ENCODE measurements at regions of chr13 and their contacts with region 1.

Region 1: DNA sequence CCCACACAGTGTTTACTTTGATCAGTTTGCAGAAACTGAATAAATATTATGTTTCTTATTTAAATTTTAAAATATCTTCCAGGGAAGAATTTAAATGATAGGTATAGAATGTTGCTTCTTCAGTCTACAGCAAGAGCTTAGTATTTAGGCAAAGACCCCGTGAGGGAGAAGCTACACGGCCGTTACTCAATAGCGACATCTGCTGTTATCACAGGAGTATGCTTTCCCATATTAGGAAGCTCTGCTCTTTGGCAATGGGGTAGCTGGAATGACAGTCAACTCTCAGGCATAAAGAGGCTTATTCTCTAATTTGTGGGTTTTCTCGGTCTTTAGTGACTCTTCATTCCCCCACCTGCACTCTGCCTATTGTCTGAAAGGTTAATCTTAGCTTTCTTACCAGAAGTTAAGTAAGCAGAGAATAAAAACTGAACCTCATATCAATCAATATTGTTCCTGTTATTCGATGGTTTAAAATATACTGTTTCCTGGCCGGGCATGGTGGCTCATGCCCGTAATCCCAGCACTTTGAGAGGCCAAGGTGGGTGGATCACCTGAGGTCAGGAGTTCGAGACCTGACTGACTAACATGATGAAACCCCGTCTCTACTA is 13.2 kb upstream of the LHFPL6 start:
- DNase-seq: peak in 7 of 9 donors; percentile 5 to 48 (median 41)
- ATAC-seq: peak; percentile 85
- H3K4me3 ChIP-seq: no peak overlapping the region
- H3K4me3 Mint-ChIP-seq: no peak overlapping the region
- H3K27ac ChIP-seq: no peak overlapping the region
- H3K27ac Mint-ChIP-seq: no peak overlapping the region
- H3K4me1 ChIP-seq: no peaks in the 10 kb centered on the region
- H3K4me1 Mint-ChIP-seq: no peaks in the 10 kb centered on the region
- H3K27me3 ChIP-seq: no peaks in the 10 kb centered on the region
- H3K27me3 Mint-ChIP-seq: peaks cover 3 to 17% (median 10%) of the 10 kb centered on the region in 5 donors

Region 2: DNA sequence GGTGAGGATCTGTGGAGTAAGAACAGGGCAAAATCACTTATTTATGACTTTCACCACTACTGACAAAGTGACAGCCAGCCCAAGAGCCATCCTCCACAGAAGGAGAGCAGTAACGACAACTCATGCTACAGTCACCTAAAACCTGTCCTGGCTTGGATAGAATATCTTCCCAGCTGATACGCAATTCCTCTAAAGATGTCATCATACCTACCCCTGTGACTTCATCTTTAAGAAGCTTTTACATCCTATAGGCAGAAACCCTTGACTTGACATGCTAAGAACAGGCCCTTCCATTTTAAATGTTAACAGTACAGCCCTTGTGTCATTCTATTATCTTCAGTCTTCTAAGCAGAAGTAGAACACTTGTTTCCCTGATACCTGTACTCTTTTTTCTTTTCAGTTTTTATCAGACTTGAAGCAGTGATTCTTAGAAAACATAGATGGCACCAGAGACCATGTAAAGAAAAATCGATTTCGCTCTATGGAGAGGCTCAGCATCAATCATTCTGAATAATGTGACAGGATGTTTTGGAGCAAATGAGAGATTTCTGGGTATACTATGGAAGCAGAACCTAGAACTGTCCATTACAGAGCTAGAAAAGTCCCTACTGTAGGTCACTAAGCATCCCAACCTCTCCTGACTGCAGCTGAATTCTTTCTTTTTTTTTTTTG is 645.7 kb before region 1 on chr13:
- CTCF ChIA-PET with region 1: no interaction called
- POLR2A ChIA-PET with region 1: no interaction called
- intact Hi-C with region 1: loop called in 1 of 2 experiments (anchors 1 kb)
- DNase-seq: peak in 2 of 9 donors; percentile 0 to 3
- ATAC-seq: no peak
- H3K4me3 ChIP-seq: no peak overlapping the region
- H3K4me3 Mint-ChIP-seq: no peak overlapping the region
- H3K27ac ChIP-seq: no peak overlapping the region
- H3K27ac Mint-ChIP-seq: no peak overlapping the region
- H3K4me1 ChIP-seq: no peaks in the 10 kb centered on the region
- H3K4me1 Mint-ChIP-seq: no peaks in the 10 kb centered on the region
- H3K27me3 ChIP-seq: no peaks in the 10 kb centered on the region
- H3K27me3 Mint-ChIP-seq: peaks cover 0 to 11% (median 7%) of the 10 kb centered on the region in 5 donors

Region 3: DNA sequence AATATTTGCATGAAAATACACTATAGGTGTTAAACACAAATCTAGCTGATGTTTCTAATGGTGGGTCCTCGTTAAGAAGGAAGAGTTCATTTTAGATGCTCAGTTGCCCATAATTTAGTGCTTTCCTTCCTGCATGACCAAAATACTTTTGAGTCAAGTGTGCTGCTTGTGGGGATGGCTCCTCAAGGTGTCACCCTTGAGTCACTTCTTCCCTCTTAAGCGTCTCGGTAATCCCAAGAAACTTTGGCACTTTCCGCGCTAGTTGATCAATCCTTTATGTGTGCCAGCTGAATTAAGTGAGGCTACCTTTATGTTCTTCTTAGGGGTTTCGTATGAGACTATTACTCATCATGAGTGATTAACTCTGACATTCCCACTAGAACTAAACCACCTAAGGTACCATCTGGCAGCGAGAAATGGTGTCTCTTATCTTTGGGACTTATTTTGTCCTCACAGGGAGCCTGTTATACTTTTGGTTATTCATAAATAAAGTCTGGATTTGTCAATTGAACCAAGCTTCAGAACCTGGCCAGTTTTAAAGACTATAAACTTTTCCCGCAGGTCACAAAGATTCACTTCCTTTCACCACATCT is 471.2 kb before region 1 on chr13:
- CTCF ChIA-PET with region 1: no interaction called
- POLR2A ChIA-PET with region 1: no interaction called
- intact Hi-C with region 1: loop called (anchors 1 kb)
- DNase-seq: peak in 1 of 9 donors; percentile 1
- ATAC-seq: no peak
- H3K4me3 ChIP-seq: no peak overlapping the region
- H3K4me3 Mint-ChIP-seq: no peak overlapping the region
- H3K27ac ChIP-seq: no peak overlapping the region
- H3K27ac Mint-ChIP-seq: no peak overlapping the region
- H3K4me1 ChIP-seq: no peaks in the 10 kb centered on the region
- H3K4me1 Mint-ChIP-seq: peaks cover 0 to 5% (median 0%) of the 10 kb centered on the region in 7 donors
- H3K27me3 ChIP-seq: no peaks in the 10 kb centered on the region
- H3K27me3 Mint-ChIP-seq: peaks cover 24 to 55% (median 39%) of the 10 kb centered on the region in 5 donors

Region 4: GRCh38 chr13:39273953-39274738 is 342.0 kb before region 1 on chr13:
- CTCF ChIA-PET with region 1: no interaction called
- POLR2A ChIA-PET with region 1: no interaction called
- intact Hi-C with region 1: loop called in 1 of 2 experiments (anchors 5 kb)
- DNase-seq: no peak
- ATAC-seq: no peak
- H3K4me3 ChIP-seq: no peak overlapping the region
- H3K4me3 Mint-ChIP-seq: no peak overlapping the region
- H3K27ac ChIP-seq: no peak overlapping the region
- H3K27ac Mint-ChIP-seq: no peak overlapping the region
- H3K4me1 ChIP-seq: no peaks in the 10 kb centered on the region
- H3K4me1 Mint-ChIP-seq: peaks cover 0 to 3% (median 0%) of the 10 kb centered on the region in 7 donors
- H3K27me3 ChIP-seq: no peaks in the 10 kb centered on the region
- H3K27me3 Mint-ChIP-seq: peaks cover 13 to 23% (median 18%) of the 10 kb centered on the region in 5 donors

Region 5: GRCh38 chr13:39676315-39676876 is 60.2 kb after region 1 on chr13:
- CTCF ChIA-PET with region 1: interaction called, 4 read pairs
- POLR2A ChIA-PET with region 1: no interaction called
- intact Hi-C with region 1: loop called (anchors 2 to 10 kb)
- DNase-seq: peak in 7 of 9 donors; percentile 24 to 60 (median 37)
- ATAC-seq: no peak
- H3K4me3 ChIP-seq: no peak overlapping the region
- H3K4me3 Mint-ChIP-seq: no peak overlapping the region
- H3K27ac ChIP-seq: no peak overlapping the region
- H3K27ac Mint-ChIP-seq: peak overlapping the region in 1 of 9 donors; percentile 23
- H3K4me1 ChIP-seq: no peaks in the 10 kb centered on the region
- H3K4me1 Mint-ChIP-seq: peaks cover 0 to 3% (median 0%) of the 10 kb centered on the region in 7 donors
- H3K27me3 ChIP-seq: no peaks in the 10 kb centered on the region
- H3K27me3 Mint-ChIP-seq: no peaks in the 10 kb centered on the region

Measured in naive thymus-derived CD4-positive, alpha-beta T cell (primary cell).